Endothelial cell of umbilical vein (primary cell): ENCODE measurements at regions of chr10 and their contacts with region 1.

Region 1: DNA sequence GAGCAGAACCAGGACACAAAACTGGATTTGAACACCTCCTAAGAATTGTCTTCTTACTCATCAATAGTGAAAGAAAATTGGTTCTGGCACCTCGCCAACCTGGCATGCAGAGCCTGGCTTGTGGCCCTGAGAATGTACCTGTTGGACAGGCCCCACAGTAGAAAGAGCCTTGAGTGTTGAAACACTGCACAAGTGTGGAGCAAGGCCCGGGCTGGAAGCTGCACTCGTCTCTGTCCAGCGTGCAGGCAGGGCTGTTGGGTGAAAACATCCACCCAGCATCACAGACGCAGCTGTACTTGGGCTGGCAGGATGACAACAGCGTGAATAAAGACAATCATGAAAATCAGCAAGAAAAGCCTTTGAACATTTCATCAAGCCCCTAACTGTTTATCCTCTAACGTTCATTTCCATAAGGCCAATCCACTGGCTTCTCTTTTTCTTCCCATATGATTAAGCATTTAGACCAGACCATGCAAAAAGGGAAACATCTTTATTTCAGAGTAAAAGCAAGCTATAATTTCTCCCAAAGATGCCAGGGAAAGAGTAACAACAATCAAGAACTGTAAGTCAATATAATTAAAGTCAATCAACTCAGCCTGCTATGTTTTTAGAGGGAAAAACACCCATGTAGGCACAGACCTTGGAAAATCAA is 15.6 kb downstream of the CUBN start:
- DNase-seq: peak; percentile 46
- H3K4me3 ChIP-seq: no peak overlapping the region
- H3K27ac ChIP-seq: no peak overlapping the region
- H3K4me1 ChIP-seq: peaks cover 20% of the 10 kb centered on the region
- H3K27me3 ChIP-seq: no peaks in the 10 kb centered on the region
- CTCF ChIP-seq: no peak
- POLR2A ChIP-seq: no peak

Region 2: DNA sequence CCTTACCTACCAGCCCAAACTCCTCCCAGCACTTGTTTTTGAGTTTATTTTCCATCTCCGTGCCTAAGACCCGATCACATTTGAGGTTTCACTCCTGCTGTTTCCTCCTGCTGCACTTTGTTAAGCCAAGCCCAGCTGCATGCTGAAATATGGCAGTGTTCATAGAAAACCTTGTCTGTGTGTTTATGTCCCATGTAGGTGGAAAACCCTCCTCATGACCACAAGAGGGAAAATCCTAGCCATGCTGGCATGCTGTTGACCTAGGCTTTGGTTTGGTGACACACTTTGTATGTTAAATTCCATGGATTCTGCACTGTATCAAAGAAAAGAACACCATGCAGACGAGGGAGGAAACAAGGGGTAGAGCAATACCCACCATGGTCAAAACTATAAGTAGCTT is 138.8 kb before region 1 on chr10:
- CTCF ChIA-PET with region 1: no interaction called
- POLR2A ChIA-PET with region 1: no interaction called
- dilution Hi-C with region 1: no loop called
- intact Hi-C with region 1: no loop called
- DNase-seq: no peak
- H3K4me3 ChIP-seq: no peak overlapping the region
- H3K27ac ChIP-seq: no peak overlapping the region
- H3K4me1 ChIP-seq: no peaks in the 10 kb centered on the region
- H3K27me3 ChIP-seq: no peaks in the 10 kb centered on the region
- CTCF ChIP-seq: no peak
- POLR2A ChIP-seq: no peak

Region 3: DNA sequence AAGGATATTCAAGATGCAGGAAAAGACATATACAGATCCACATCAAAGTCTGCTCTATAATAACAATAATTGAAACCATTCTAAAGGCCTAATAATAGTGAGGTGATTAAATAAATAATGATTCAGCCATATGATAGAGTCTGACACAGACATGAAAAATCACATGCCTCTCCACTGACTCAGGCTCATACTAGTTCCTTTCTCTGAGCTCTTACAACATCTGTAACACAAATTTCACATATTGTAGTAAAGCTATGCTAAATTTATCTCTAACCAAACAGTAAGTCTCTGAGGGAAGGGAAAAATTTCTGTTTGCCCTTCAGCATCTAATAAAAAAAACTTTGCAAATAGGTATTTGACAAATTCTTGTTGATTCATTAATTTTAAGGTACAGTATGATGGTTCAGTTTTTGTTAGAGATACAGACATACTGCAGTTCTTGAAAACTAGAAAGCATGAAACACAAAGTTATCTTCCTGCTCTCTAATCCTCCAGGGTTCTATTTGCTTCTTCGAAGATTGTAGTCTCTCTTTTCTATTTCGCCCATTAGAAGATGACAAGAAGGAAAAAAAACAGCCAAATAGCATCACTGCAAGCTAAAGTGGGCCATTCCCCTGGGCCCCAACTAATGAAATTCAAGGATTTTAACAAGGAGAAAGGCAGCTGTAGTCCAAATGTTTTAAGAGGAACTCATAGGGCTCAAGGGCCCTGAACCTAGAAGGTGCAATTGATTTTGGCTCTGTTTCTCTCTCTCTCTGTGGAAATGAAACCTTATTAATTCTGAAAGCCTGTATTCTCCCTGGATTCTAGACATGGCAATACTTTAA is 38.3 kb before region 1 on chr10:
- CTCF ChIA-PET with region 1: no interaction called
- POLR2A ChIA-PET with region 1: no interaction called
- dilution Hi-C with region 1: no loop called
- intact Hi-C with region 1: loop called (anchors 2 kb)
- DNase-seq: peak; percentile 89
- H3K4me3 ChIP-seq: no peak overlapping the region
- H3K27ac ChIP-seq: peak overlapping the region; percentile 95
- H3K4me1 ChIP-seq: peaks cover 49% of the 10 kb centered on the region
- H3K27me3 ChIP-seq: no peaks in the 10 kb centered on the region
- CTCF ChIP-seq: no peak
- POLR2A ChIP-seq: no peak

Region 4: DNA sequence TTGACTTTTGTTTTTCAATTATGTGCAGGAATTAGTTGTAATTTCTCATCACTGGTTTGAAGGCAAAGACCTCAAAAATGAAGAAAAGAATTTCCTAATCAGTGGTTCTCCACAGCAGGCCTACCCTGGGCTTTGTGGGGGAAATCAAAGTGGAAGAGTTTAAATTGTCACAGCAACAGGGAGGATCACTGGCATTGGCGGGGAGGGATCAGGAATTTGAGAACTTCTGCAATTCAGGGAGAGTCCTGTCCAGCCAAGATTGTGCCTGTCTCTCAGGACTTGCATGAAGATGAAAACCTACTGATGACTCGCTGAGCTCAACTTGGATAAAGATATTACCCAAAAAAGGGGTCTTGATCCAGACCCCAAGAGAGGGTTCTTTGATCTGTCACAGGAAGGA is 433.0 kb after region 1 on chr10:
- CTCF ChIA-PET with region 1: no interaction called
- POLR2A ChIA-PET with region 1: no interaction called
- dilution Hi-C with region 1: no loop called
- intact Hi-C with region 1: no loop called
- DNase-seq: no peak
- H3K4me3 ChIP-seq: no peak overlapping the region
- H3K27ac ChIP-seq: no peak overlapping the region
- H3K4me1 ChIP-seq: no peaks in the 10 kb centered on the region
- H3K27me3 ChIP-seq: no peaks in the 10 kb centered on the region
- CTCF ChIP-seq: no peak
- POLR2A ChIP-seq: no peak